ENCODE measurements at regions of chr17 and their contacts with region 1.

Region 1: GRCh38 chr17:6361731-6362130 is 73.2 kb downstream of the AIPL1 start:
- DNase-seq: no peak
- H3K4me3 ChIP-seq: no peak overlapping the region
- H3K27ac ChIP-seq: no peak overlapping the region
- H3K4me1 ChIP-seq: peaks cover 11% of the 10 kb centered on the region
- H3K27me3 ChIP-seq: no peaks in the 10 kb centered on the region
- CTCF ChIP-seq: no peak

Region 2: DNA sequence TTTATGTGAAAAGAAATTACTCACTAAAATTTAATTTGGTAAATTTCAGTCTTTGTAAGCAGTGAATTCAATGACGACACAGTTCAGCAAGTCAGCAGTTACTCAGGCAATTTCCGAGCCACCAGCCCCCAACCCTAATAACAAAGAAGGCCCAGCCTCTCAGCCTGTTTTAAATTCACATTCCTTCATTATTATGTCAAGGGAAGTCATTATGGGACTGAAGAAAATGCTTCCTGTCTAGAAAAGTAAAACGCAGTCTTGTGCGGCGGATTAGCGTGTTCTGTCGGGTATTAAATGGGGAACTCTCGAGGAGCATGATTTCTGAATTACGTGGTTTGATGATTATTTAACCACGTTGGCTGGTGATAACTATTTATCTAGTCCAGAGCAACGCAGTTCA is 104.4 kb before region 1 on chr17:
- CTCF ChIA-PET with region 1: no interaction called
- dilution Hi-C with region 1: loop called (anchors 5 kb)
- in situ Hi-C with region 1: no loop called
- intact Hi-C with region 1: no loop called
- DNase-seq: no peak
- H3K4me3 ChIP-seq: no peak overlapping the region
- H3K27ac ChIP-seq: no peak overlapping the region
- H3K4me1 ChIP-seq: no peaks in the 10 kb centered on the region
- H3K27me3 ChIP-seq: peaks cover 4% of the 10 kb centered on the region
- CTCF ChIP-seq: no peak

Region 3: GRCh38 chr17:6599364-6599763 is 237.6 kb after region 1 on chr17:
- CTCF ChIA-PET with region 1: no interaction called
- dilution Hi-C with region 1: no loop called
- in situ Hi-C with region 1: no loop called
- intact Hi-C with region 1: no loop called
- DNase-seq: no peak
- H3K4me3 ChIP-seq: no peak overlapping the region
- H3K27ac ChIP-seq: no peak overlapping the region
- H3K4me1 ChIP-seq: no peaks in the 10 kb centered on the region
- H3K27me3 ChIP-seq: no peaks in the 10 kb centered on the region
- CTCF ChIP-seq: no peak

Region 4: GRCh38 chr17:6721744-6722143 is 360.0 kb after region 1 on chr17:
- CTCF ChIA-PET with region 1: no interaction called
- dilution Hi-C with region 1: no loop called
- in situ Hi-C with region 1: no loop called
- intact Hi-C with region 1: no loop called
- DNase-seq: no peak
- H3K4me3 ChIP-seq: no peak overlapping the region
- H3K27ac ChIP-seq: no peak overlapping the region
- H3K4me1 ChIP-seq: no peaks in the 10 kb centered on the region
- H3K27me3 ChIP-seq: no peaks in the 10 kb centered on the region
- CTCF ChIP-seq: no peak